ENCODE measurements at regions of chr7 and their contacts with region 1.

Region 1: GRCh38 chr7:50467817-50468610 is 17.9 kb upstream of the FIGNL1 start:
- DNase-seq: peak; percentile 74
- H3K4me3 Mint-ChIP-seq: peak overlapping the region; percentile 7
- H3K27ac Mint-ChIP-seq: no peak overlapping the region
- H3K4me1 Mint-ChIP-seq: peaks cover 8% of the 10 kb centered on the region
- H3K27me3 Mint-ChIP-seq: peaks cover 1% of the 10 kb centered on the region

Region 2: DNA sequence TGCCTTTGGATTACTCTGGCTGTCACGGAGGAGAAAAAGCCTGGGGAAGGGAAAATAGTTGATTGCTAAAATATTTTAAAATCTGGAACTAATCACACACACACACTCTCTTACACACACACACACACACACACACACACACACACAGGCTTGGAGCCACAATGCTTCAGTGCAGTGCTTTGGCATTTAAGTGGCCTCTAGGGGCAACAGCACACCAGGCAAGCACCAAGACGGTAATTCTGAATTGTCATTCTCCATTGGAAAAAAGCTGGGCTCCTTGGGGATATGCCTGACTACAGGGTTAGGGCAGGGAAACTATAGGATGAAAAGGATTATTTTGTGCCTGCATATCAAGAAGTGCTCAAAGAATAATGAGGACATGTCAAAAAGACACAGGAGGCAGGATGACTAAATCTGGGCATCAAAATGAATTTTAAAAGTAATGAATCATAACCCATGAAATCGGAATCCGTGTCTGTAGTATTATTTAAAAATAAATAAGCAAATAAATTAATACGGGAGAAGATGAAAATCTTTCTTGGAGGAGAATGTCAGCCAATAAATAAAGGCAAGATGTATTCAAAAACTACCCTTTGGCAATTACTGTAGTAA is 127.6 kb after region 1 on chr7:
- intact Hi-C with region 1: loop called (anchors 1 kb)
- DNase-seq: no peak
- H3K4me3 Mint-ChIP-seq: no peak overlapping the region
- H3K27ac Mint-ChIP-seq: peak overlapping the region; percentile 75
- H3K4me1 Mint-ChIP-seq: peaks cover 58% of the 10 kb centered on the region
- H3K27me3 Mint-ChIP-seq: no peaks in the 10 kb centered on the region

Region 3: DNA sequence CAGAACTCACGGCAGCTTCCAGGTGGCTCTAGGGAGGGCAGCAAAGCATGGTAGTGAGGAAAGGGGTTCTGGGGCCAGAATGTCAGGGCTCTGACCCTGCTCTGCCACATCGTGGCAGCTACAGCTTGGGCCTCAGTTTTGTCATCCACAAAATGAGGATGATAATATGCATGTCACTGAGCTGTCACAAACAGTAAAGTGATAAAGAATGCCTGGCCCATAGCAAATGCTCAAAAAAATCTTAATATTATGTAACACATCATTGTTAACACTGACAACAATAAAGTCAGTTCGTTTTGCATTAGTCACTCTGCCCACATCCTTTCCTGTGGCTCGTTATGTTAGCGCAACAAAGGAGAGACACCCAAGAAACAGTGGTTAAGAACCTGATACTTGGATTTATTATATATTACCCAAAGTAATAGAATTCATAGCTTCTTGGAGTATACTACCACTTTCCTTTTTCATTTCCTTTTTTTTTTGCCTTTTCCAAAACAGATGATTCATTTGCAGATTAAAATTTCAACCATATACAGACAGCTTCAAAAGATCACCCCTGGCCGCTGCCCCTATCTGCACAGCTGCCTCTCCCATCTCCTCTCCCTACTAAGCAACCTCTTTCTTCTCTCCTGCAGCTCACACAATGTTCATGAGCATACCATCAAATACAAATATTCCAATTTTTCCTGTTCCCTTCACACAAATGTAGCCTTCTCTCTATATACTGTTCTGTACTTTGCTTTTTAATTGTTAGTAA is 142.7 kb after region 1 on chr7:
- intact Hi-C with region 1: loop called (anchors 5 kb)
- DNase-seq: peak; percentile 47
- H3K4me3 Mint-ChIP-seq: no peak overlapping the region
- H3K27ac Mint-ChIP-seq: no peak overlapping the region
- H3K4me1 Mint-ChIP-seq: peaks cover 45% of the 10 kb centered on the region
- H3K27me3 Mint-ChIP-seq: no peaks in the 10 kb centered on the region

Region 4: GRCh38 chr7:50632561-50633413 is 164.8 kb after region 1 on chr7:
- intact Hi-C with region 1: loop called (anchors 1 kb)
- DNase-seq: peak; percentile 37
- H3K4me3 Mint-ChIP-seq: no peak overlapping the region
- H3K27ac Mint-ChIP-seq: no peak overlapping the region
- H3K4me1 Mint-ChIP-seq: peaks cover 7% of the 10 kb centered on the region
- H3K27me3 Mint-ChIP-seq: peaks cover 17% of the 10 kb centered on the region

Region 5: GRCh38 chr7:50679218-50680007 is 211.4 kb after region 1 on chr7:
- intact Hi-C with region 1: loop called (anchors 1 kb)
- DNase-seq: no peak
- H3K4me3 Mint-ChIP-seq: no peak overlapping the region
- H3K27ac Mint-ChIP-seq: no peak overlapping the region
- H3K4me1 Mint-ChIP-seq: peaks cover 4% of the 10 kb centered on the region
- H3K27me3 Mint-ChIP-seq: peaks cover 11% of the 10 kb centered on the region

Region 6: DNA sequence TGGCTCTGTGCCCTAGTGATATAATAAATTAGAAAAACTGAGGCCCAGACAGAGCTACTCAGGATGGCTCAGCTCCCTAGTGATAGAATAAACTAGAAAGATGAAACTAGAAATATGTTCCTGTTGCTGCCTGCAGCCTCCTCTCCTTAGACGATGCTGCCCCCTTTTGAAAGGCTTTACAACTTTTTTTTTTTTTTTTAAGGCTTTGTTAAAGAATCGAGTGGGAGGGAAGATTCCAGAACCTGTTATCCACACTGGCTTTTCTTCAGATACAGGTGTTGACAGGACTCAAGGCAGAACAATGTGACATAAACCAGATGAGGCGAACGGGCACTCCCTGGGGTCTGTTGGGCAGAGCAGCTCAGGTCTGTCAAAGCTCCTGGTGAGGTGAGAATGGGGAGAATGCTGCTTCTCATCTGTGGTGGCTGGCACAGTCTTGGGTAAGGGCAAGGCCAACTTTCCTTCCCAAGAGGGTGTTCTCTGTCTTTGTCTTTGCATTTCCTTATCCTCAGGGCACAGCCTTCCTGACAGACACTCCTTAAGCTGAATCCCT is 673.5 kb after region 1 on chr7:
- intact Hi-C with region 1: loop called (anchors 2 kb)
- DNase-seq: no peak
- H3K4me3 Mint-ChIP-seq: no peak overlapping the region
- H3K27ac Mint-ChIP-seq: no peak overlapping the region
- H3K4me1 Mint-ChIP-seq: peaks cover 23% of the 10 kb centered on the region
- H3K27me3 Mint-ChIP-seq: peaks cover 11% of the 10 kb centered on the region

Region 7: GRCh38 chr7:51162724-51163329 is 694.8 kb after region 1 on chr7:
- intact Hi-C with region 1: loop called (anchors 1 kb)
- DNase-seq: peak; percentile 57
- H3K4me3 Mint-ChIP-seq: no peak overlapping the region
- H3K27ac Mint-ChIP-seq: no peak overlapping the region
- H3K4me1 Mint-ChIP-seq: peaks cover 16% of the 10 kb centered on the region
- H3K27me3 Mint-ChIP-seq: peaks cover 39% of the 10 kb centered on the region

Measured in activated T-helper 2 cell treated with anti-CD3 and anti-CD28 coated beads, Interferon-gamma antibody, Interleukin-2, Interleukin-4, amounts not matched to agents 10 μg/mL and 5 μg/mL and 100 μg/mL, durations not matched to agents 14 hours and 24 hours and 36 hours (primary cell).